HepG2 (cell line): ENCODE measurements at regions of chr16 and their contacts with region 1.

Region 1: DNA sequence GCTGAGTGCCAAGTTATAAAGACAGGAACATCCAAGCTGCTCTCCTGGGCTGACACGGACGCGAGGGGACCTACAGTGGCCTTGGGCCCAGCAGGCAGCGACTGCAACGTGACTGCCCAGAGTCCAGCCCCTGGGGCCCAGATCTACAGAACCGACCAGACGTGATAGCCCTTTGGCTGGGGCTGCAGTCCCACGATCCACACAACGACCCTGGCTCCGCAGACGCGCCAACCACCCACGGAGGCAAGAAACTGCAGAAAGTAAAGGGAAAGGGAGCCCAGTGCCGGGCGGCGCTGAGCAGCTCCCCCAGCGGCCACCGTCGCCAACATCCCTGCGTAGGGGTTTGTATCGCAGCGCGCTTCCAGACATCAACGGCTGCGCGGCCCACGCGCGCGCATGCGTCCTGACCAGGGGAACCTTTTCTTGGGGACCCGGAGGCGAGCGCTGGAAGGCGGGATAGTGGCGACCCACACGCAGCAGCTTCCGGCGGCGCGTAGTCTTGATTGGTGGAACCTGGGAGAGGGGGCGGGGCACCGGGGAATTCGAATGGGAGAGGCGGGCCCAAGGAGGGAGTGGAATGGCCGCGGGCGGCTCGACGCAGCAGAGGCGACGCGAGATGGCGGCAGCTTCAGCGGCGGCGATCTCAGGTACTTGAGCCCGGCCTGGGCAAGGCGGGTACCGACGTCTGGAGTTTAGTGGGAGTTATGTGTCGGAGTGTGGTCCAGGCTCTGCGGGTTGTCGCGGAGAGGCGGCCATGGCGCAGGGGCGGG is at the start of gene KIF22:
- DNase-seq: peak; percentile 98
- ATAC-seq: peak; percentile 95
- H3K4me3 ChIP-seq: peak within 1 kb of the TSS; percentile 77 to 97 (median 84)
- H3K27ac ChIP-seq: peak within 1 kb of the TSS; percentile 83
- H3K4me1 ChIP-seq: peaks cover 62% of the 10 kb centered on the region
- H3K27me3 ChIP-seq: no peaks in the 10 kb centered on the region; a peak in 1 of 5 replicates
- CTCF ChIP-seq: peak; percentile 97
- EP300 ChIP-seq: peak; percentile 29 to 43; a peak in 2 of 4 replicates
- POLR2A ChIP-seq: peak; percentile 89
- RAD21 ChIP-seq: peak; percentile 93
- total RNA-seq, gene KIF22: 103 and 118 TPM in 2 replicates

Region 2: GRCh38 chr16:29738514-29738913 is 51.9 kb before region 1 on chr16:
- CTCF ChIA-PET with region 1: interaction called, 6 read pairs
- POLR2A ChIA-PET with region 1: interaction called, 4 read pairs
- in situ Hi-C with region 1: no loop called
- intact Hi-C with region 1: loop called (anchors 5 kb)
- DNase-seq: no peak
- ATAC-seq: no peak
- H3K4me3 ChIP-seq: no peak overlapping the region
- H3K27ac ChIP-seq: no peak overlapping the region
- H3K4me1 ChIP-seq: peaks cover 75% of the 10 kb centered on the region
- H3K27me3 ChIP-seq: peaks cover 0 to 1% of the 10 kb centered on the region in 2 experiments; a peak in 3 of 5 replicates
- CTCF ChIP-seq: no peak
- EP300 ChIP-seq: no peak
- POLR2A ChIP-seq: no peak
- RAD21 ChIP-seq: no peak

Region 3: GRCh38 chr16:29757950-29758466 is 32.4 kb before region 1 on chr16:
- CTCF ChIA-PET with region 1: no interaction called
- POLR2A ChIA-PET with region 1: interaction called, 10 read pairs
- in situ Hi-C with region 1: no loop called
- intact Hi-C with region 1: no loop called
- DNase-seq: peak; percentile 82
- ATAC-seq: peak; percentile 80
- H3K4me3 ChIP-seq: peak overlapping the region in 2 of 3 experiments; percentile 25 to 41; a peak in 3 of 6 replicates
- H3K27ac ChIP-seq: peak overlapping the region; percentile 69
- H3K4me1 ChIP-seq: peaks cover 79% of the 10 kb centered on the region
- H3K27me3 ChIP-seq: no peaks in the 10 kb centered on the region
- CTCF ChIP-seq: peak; percentile 47
- EP300 ChIP-seq: peak in 1 of 2 experiments; percentile 58; a peak in 2 of 4 replicates
- POLR2A ChIP-seq: no peak
- RAD21 ChIP-seq: no peak

Region 4: DNA sequence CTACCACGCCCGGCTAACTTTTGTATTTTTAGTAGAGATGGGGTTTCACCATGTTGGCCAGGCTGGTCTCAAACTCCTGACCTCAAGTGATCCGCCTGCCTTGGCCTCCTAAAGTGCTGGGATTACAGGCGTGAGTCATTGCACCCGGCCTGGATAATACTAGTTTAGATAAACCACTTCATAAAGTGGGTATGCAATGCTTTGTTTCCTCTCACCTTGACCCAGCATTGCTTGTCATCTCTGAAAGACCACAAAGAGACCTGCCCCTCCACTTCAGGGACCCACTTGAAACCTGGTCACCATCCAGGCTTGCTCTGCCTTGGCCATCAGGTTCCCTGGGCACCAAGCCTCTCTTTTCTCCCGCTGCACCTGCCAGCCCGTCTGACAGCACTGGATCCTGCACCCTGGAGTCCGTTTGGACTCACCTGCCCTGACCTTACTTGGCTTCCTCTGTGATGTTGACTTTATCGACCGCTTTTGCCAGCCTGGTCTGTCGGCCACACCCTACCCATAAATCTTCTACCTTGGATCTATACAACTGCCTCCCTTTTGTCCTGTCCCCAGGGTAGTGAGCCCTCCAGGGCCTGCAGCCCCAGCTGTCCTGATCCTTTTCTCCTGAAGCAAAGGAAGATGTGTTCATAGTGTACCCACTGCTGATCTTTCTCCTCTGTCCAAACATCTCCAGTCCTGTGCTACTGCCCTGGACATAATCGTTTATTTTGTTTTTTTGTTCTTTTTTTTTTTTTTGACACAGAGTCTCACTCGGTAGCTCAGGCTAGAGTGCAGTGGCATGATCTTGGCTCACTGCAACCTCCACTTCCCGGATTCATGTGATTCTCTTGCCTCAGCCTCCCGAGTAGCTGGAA is 25.0 kb before region 1 on chr16:
- CTCF ChIA-PET with region 1: no interaction called
- POLR2A ChIA-PET with region 1: interaction called, 11 read pairs
- in situ Hi-C with region 1: no loop called
- intact Hi-C with region 1: no loop called
- DNase-seq: peak; percentile 92
- ATAC-seq: peak; percentile 93
- H3K4me3 ChIP-seq: peak overlapping the region in 1 of 3 experiments; percentile 42; a peak in 1 of 6 replicates
- H3K27ac ChIP-seq: peak overlapping the region; percentile 66
- H3K4me1 ChIP-seq: peaks cover 77% of the 10 kb centered on the region
- H3K27me3 ChIP-seq: no peaks in the 10 kb centered on the region
- CTCF ChIP-seq: peak; percentile 50
- EP300 ChIP-seq: peak; percentile 77 to 93; a peak in 3 of 4 replicates
- POLR2A ChIP-seq: no peak
- RAD21 ChIP-seq: no peak

Region 5: GRCh38 chr16:29779474-29779873 is 10.9 kb before region 1 on chr16:
- CTCF ChIA-PET with region 1: no interaction called
- POLR2A ChIA-PET with region 1: interaction called, 10 read pairs
- in situ Hi-C with region 1: no loop called
- intact Hi-C with region 1: no loop called
- DNase-seq: peak; percentile 81
- ATAC-seq: peak; percentile 82
- H3K4me3 ChIP-seq: no peak overlapping the region
- H3K27ac ChIP-seq: no peak overlapping the region
- H3K4me1 ChIP-seq: peaks cover 51% of the 10 kb centered on the region
- H3K27me3 ChIP-seq: peaks cover 2 to 30% of the 10 kb centered on the region in 2 experiments; a peak in 4 of 5 replicates
- CTCF ChIP-seq: no peak
- EP300 ChIP-seq: no peak
- POLR2A ChIP-seq: no peak
- RAD21 ChIP-seq: no peak

Region 6: GRCh38 chr16:29805378-29806098 is 15.2 kb after region 1 on chr16:
- CTCF ChIA-PET with region 1: no interaction called
- POLR2A ChIA-PET with region 1: interaction called, 37 read pairs
- in situ Hi-C with region 1: no loop called
- intact Hi-C with region 1: loop called (anchors 1 kb)
- DNase-seq: peak; percentile 97
- ATAC-seq: peak; percentile 78
- H3K4me3 ChIP-seq: peak overlapping the region; percentile 59 to 85 (median 77)
- H3K27ac ChIP-seq: peak overlapping the region; percentile 88
- H3K4me1 ChIP-seq: peaks cover 50% of the 10 kb centered on the region
- H3K27me3 ChIP-seq: no peaks in the 10 kb centered on the region
- CTCF ChIP-seq: peak; percentile 36
- EP300 ChIP-seq: peak in 1 of 2 experiments; percentile 64; a peak in 1 of 4 replicates
- POLR2A ChIP-seq: peak in 1 of 2 experiments; percentile 82; a peak in 2 of 4 replicates
- RAD21 ChIP-seq: peak; percentile 66

Region 7: GRCh38 chr16:29825145-29826044 is 35.0 kb after region 1 on chr16:
- CTCF ChIA-PET with region 1: no interaction called
- POLR2A ChIA-PET with region 1: interaction called, 11 read pairs
- in situ Hi-C with region 1: no loop called
- intact Hi-C with region 1: no loop called
- DNase-seq: no peak
- ATAC-seq: peak; percentile 2; the same call in 2 of the 3 replicates
- H3K4me3 ChIP-seq: no peak overlapping the region
- H3K27ac ChIP-seq: peak overlapping the region; percentile 16
- H3K4me1 ChIP-seq: peaks cover 100% of the 10 kb centered on the region
- H3K27me3 ChIP-seq: no peaks in the 10 kb centered on the region
- CTCF ChIP-seq: no peak
- EP300 ChIP-seq: no peak
- POLR2A ChIP-seq: no peak
- RAD21 ChIP-seq: no peak